CD8-positive, alpha-beta T cell (primary cell): ENCODE measurements at regions of chr4 and their contacts with region 1.

Region 1: GRCh38 chr4:55853484-55854046 is at the start of gene EXOC1:
- DNase-seq: peak; percentile 90 to 98 (median 97)
- ATAC-seq: peak; percentile 96
- H3K4me3 ChIP-seq: peak within 1 kb of the TSS; percentile 96
- H3K4me3 Mint-ChIP-seq: peak within 1 kb of the TSS; percentile 36
- H3K27ac ChIP-seq: peak within 1 kb of the TSS; percentile 70 to 86
- H3K27ac Mint-ChIP-seq: peak within 1 kb of the TSS; percentile 64
- H3K4me1 ChIP-seq: peaks cover 40% of the 10 kb centered on the region
- H3K4me1 Mint-ChIP-seq: peaks cover 38% of the 10 kb centered on the region
- H3K27me3 ChIP-seq: no peaks in the 10 kb centered on the region
- H3K27me3 Mint-ChIP-seq: no peaks in the 10 kb centered on the region
- CTCF ChIP-seq: no peak
- total RNA-seq, gene EXOC1: 12.1 to 14.5 TPM

Region 2: DNA sequence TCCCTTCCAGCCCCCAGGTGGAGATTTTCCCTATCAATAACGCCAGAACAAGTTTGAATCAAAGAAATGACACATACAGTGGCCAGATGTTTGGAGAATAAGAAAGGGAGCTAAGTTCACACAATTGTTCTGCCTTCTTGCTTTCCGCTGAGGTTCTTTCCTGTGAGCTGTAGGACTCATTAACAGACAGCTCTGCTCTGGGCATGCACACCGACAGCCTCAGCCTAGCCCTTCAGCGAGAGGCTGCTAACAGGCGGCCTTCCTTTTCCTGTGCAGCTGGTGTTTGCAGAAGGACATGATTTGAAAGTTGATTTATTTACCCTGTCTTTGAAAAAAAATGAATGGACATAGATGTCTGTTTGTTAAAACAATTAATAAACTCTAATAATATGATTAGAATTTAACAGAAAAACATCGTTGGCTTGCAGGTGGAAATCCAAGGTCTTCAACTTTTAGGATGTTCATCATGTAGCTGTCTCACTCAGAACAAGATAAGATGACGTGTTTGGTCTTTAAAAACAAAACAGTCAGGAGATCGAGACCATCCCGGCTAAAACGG is 911.5 kb before region 1 on chr4:
- CTCF ChIA-PET with region 1: no interaction called
- POLR2A ChIA-PET with region 1: no interaction called
- intact Hi-C with region 1: loop called in 1 of 2 experiments (anchors 5 kb)
- DNase-seq: peak; percentile 18 to 78 (median 34)
- ATAC-seq: peak; percentile 79
- H3K4me3 ChIP-seq: peak overlapping the region in 1 of 2 experiments; percentile 12
- H3K4me3 Mint-ChIP-seq: peak overlapping the region; percentile 71
- H3K27ac ChIP-seq: peak overlapping the region; percentile 59 to 72
- H3K27ac Mint-ChIP-seq: peak overlapping the region; percentile 98
- H3K4me1 ChIP-seq: peaks cover 40% of the 10 kb centered on the region
- H3K4me1 Mint-ChIP-seq: peaks cover 56% of the 10 kb centered on the region
- H3K27me3 ChIP-seq: no peaks in the 10 kb centered on the region
- H3K27me3 Mint-ChIP-seq: no peaks in the 10 kb centered on the region
- CTCF ChIP-seq: no peak

Region 3: GRCh38 chr4:55395529-55396307 is 457.8 kb before region 1 on chr4 and contains the start of gene TMEM165:
- CTCF ChIA-PET with region 1: no interaction called
- POLR2A ChIA-PET with region 1: no interaction called
- intact Hi-C with region 1: loop called (anchors 1 to 5 kb)
- DNase-seq: peak; percentile 72 to 93 (median 86)
- ATAC-seq: peak; percentile 94
- H3K4me3 ChIP-seq: peak within 1 kb of the TSS; percentile 68 to 74
- H3K4me3 Mint-ChIP-seq: peak within 1 kb of the TSS; percentile 97
- H3K27ac ChIP-seq: peak within 1 kb of the TSS; percentile 83 to 93
- H3K27ac Mint-ChIP-seq: peak within 1 kb of the TSS; percentile 98
- H3K4me1 ChIP-seq: peaks cover 36% of the 10 kb centered on the region
- H3K4me1 Mint-ChIP-seq: peaks cover 38% of the 10 kb centered on the region
- H3K27me3 ChIP-seq: no peaks in the 10 kb centered on the region
- H3K27me3 Mint-ChIP-seq: no peaks in the 10 kb centered on the region
- CTCF ChIP-seq: peak; percentile 0
- total RNA-seq, gene TMEM165: 31.0 to 31.5 TPM

Region 4: DNA sequence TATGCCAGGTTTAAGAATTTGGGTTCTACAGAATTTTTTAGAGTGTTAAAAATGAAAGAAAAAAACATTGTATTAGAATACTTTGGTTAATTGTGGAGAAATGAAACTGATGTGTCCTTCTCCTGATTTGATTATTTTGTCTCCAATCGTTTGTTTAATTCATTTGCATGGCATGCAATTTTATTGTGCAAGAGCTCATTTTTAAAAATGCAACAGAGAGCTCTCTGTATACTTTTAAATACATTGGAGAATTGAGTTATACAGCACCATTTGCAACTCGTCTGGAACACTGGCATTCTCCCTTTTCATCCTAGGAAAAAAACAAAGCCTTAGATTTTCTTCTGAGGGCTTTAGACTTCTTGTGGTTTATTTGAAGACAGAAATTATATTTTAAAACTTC is 33.3 kb before region 1 on chr4:
- CTCF ChIA-PET with region 1: no interaction called
- POLR2A ChIA-PET with region 1: no interaction called
- intact Hi-C with region 1: no loop called
- DNase-seq: no peak
- ATAC-seq: no peak
- H3K4me3 ChIP-seq: no peak overlapping the region
- H3K4me3 Mint-ChIP-seq: no peak overlapping the region
- H3K27ac ChIP-seq: no peak overlapping the region
- H3K27ac Mint-ChIP-seq: no peak overlapping the region
- H3K4me1 ChIP-seq: no peaks in the 10 kb centered on the region
- H3K4me1 Mint-ChIP-seq: peaks cover 6% of the 10 kb centered on the region
- H3K27me3 ChIP-seq: peaks cover 0 to 3% of the 10 kb centered on the region in 2 experiments
- H3K27me3 Mint-ChIP-seq: peaks cover 21% of the 10 kb centered on the region
- CTCF ChIP-seq: no peak

Region 5: GRCh38 chr4:55838356-55838755 is 15.2 kb before region 1 on chr4:
- CTCF ChIA-PET with region 1: no interaction called
- POLR2A ChIA-PET with region 1: no interaction called
- intact Hi-C with region 1: no loop called
- DNase-seq: no peak
- ATAC-seq: no peak
- H3K4me3 ChIP-seq: no peak overlapping the region
- H3K4me3 Mint-ChIP-seq: no peak overlapping the region
- H3K27ac ChIP-seq: no peak overlapping the region
- H3K27ac Mint-ChIP-seq: no peak overlapping the region
- H3K4me1 ChIP-seq: no peaks in the 10 kb centered on the region
- H3K4me1 Mint-ChIP-seq: no peaks in the 10 kb centered on the region
- H3K27me3 ChIP-seq: no peaks in the 10 kb centered on the region
- H3K27me3 Mint-ChIP-seq: peaks cover 26% of the 10 kb centered on the region
- CTCF ChIP-seq: no peak

Region 6: DNA sequence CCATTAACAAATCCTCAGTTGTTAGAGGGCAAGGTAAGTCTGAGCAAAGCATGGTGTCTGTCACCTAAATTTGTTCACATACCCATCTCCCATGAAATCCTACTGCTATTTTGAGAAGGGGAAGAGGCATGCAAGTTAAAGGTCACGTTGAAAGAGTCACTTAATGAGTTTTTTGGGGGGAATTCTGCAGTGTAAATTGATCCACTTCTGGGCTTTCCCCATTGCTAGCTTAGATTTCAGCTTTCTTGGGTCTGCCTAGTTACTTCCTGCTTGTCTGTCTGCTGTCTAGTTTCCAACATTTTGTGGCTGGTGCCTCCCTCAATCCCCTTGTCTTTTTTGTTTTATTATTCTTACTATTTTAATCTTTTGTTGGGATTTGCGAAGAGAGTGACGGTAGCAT is 127.2 kb after region 1 on chr4:
- CTCF ChIA-PET with region 1: no interaction called
- POLR2A ChIA-PET with region 1: no interaction called
- intact Hi-C with region 1: no loop called
- DNase-seq: no peak
- ATAC-seq: no peak
- H3K4me3 ChIP-seq: no peak overlapping the region
- H3K4me3 Mint-ChIP-seq: no peak overlapping the region
- H3K27ac ChIP-seq: no peak overlapping the region
- H3K27ac Mint-ChIP-seq: no peak overlapping the region
- H3K4me1 ChIP-seq: no peaks in the 10 kb centered on the region
- H3K4me1 Mint-ChIP-seq: no peaks in the 10 kb centered on the region
- H3K27me3 ChIP-seq: no peaks in the 10 kb centered on the region
- H3K27me3 Mint-ChIP-seq: no peaks in the 10 kb centered on the region
- CTCF ChIP-seq: no peak